H1 (cell line): ENCODE measurements at regions of chr2 and their contacts with region 1.

Region 1: GRCh38 chr2:100262555-100263320 is 59.6 kb downstream of the LONRF2 start:
- DNase-seq: peak in 1 of 2 experiments; percentile 89
- H3K4me3 ChIP-seq: peak overlapping the region in 3 of 4 experiments; percentile 4 to 45 (median 15); a peak in 3 of 8 replicates
- H3K27ac ChIP-seq: no peak overlapping the region
- H3K4me1 ChIP-seq: no peaks in the 10 kb centered on the region; a peak in 1 of 7 replicates
- H3K27me3 ChIP-seq: no peaks in the 10 kb centered on the region
- CTCF ChIP-seq: peak; percentile 86 to 91 (median 89)
- EP300 ChIP-seq: no peak
- POLR2A ChIP-seq: no peak
- RAD21 ChIP-seq: peak; percentile 89 to 91

Region 2: GRCh38 chr2:99565227-99565626 is 697.5 kb before region 1 on chr2:
- CTCF ChIA-PET with region 1: interaction called, 29 read pairs
- POLR2A ChIA-PET with region 1: no interaction called
- DNase-seq: no peak
- H3K4me3 ChIP-seq: no peak overlapping the region
- H3K27ac ChIP-seq: no peak overlapping the region
- H3K4me1 ChIP-seq: peaks cover 0 to 3% (median 0%) of the 10 kb centered on the region in 4 experiments; a peak in 1 of 7 replicates
- H3K27me3 ChIP-seq: no peaks in the 10 kb centered on the region
- CTCF ChIP-seq: no peak
- EP300 ChIP-seq: no peak
- POLR2A ChIP-seq: no peak
- RAD21 ChIP-seq: no peak

Region 3: GRCh38 chr2:100272841-100273329 is 10.1 kb after region 1 on chr2:
- CTCF ChIA-PET with region 1: interaction called, 103 read pairs
- POLR2A ChIA-PET with region 1: no interaction called
- DNase-seq: no peak
- H3K4me3 ChIP-seq: no peak overlapping the region
- H3K27ac ChIP-seq: no peak overlapping the region
- H3K4me1 ChIP-seq: peaks cover 0 to 6% (median 0%) of the 10 kb centered on the region in 4 experiments; a peak in 1 of 7 replicates
- H3K27me3 ChIP-seq: no peaks in the 10 kb centered on the region
- CTCF ChIP-seq: no peak
- EP300 ChIP-seq: no peak
- POLR2A ChIP-seq: no peak
- RAD21 ChIP-seq: no peak

Region 4: GRCh38 chr2:100344433-100344832 is 81.7 kb after region 1 on chr2:
- CTCF ChIA-PET with region 1: interaction called, 11 read pairs
- POLR2A ChIA-PET with region 1: no interaction called
- DNase-seq: no peak
- H3K4me3 ChIP-seq: no peak overlapping the region
- H3K27ac ChIP-seq: no peak overlapping the region
- H3K4me1 ChIP-seq: no peaks in the 10 kb centered on the region
- H3K27me3 ChIP-seq: no peaks in the 10 kb centered on the region
- CTCF ChIP-seq: no peak
- EP300 ChIP-seq: no peak
- POLR2A ChIP-seq: no peak
- RAD21 ChIP-seq: no peak

Region 5: DNA sequence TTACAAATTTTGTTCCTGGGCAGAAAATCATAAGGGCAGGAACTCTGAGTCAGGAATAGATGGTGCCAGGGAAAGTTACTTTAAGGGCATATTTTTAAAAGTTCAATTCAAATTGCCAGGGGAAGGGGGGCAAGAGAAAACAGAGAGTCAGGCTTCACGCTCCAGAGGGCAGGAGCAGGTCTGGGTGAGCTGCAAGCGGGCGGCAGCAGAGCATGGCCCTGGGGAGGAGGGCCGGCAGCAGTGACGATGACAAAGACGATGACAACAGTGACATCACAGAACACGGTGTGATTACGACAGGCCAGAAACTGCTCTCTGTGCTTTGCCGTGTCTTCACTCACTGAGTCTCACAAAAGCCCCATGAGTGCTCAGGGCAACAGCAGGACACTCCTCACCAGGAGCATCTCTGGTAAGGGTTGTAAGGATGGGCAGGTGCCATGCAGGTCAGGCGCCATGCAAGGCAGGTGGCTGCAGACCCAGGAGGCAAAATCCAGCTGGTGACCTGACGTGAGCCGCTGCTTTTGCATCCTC is 131.4 kb after region 1 on chr2:
- CTCF ChIA-PET with region 1: interaction called, 70 read pairs
- POLR2A ChIA-PET with region 1: interaction called, 3 read pairs
- DNase-seq: no peak
- H3K4me3 ChIP-seq: no peak overlapping the region
- H3K27ac ChIP-seq: no peak overlapping the region
- H3K4me1 ChIP-seq: no peaks in the 10 kb centered on the region
- H3K27me3 ChIP-seq: no peaks in the 10 kb centered on the region
- CTCF ChIP-seq: no peak
- EP300 ChIP-seq: no peak
- POLR2A ChIP-seq: no peak
- RAD21 ChIP-seq: no peak

Region 6: DNA sequence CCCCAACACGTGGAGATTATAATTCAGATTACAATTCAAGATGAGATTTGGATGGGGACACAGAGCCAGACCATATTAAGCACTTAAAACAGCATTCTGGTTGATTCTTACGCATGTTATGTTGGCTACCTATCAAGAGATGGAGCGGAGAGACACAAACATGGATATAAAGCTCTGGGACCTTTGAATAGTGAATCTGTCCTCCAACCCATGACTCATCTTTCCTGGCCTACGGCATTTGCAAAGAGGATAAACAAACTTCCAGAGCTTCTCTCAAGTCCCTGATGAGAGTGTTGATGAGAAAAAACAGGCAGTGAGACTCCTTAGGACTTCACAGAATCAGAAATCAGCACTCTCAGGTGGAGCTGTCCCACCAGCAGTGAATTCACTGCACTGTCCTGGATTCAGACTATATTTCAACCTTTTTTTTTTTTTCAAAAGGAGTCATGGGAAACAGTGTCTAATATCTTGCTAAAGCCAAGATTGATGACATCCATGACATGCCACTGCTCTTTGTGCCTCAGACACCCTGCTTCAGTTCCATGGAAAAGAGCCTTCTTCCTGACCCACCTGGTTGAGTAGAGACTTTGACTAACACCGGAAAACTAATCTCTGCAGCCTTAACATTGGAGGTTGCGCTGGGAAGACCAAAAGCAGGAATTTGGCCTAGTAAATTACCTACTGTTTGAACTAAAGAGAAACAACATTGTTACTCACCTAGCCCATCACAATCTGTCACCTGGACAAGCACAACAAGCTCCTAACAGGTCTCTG is 495.1 kb after region 1 on chr2:
- CTCF ChIA-PET with region 1: no interaction called
- POLR2A ChIA-PET with region 1: no interaction called
- DNase-seq: no peak
- H3K4me3 ChIP-seq: no peak overlapping the region
- H3K27ac ChIP-seq: no peak overlapping the region
- H3K4me1 ChIP-seq: no peaks in the 10 kb centered on the region
- H3K27me3 ChIP-seq: no peaks in the 10 kb centered on the region
- CTCF ChIP-seq: no peak
- EP300 ChIP-seq: no peak
- POLR2A ChIP-seq: no peak
- RAD21 ChIP-seq: no peak